Pancreas (tissue), 10 donors: ENCODE measurements at regions of chr9 and their contacts with region 1.

Region 1: DNA sequence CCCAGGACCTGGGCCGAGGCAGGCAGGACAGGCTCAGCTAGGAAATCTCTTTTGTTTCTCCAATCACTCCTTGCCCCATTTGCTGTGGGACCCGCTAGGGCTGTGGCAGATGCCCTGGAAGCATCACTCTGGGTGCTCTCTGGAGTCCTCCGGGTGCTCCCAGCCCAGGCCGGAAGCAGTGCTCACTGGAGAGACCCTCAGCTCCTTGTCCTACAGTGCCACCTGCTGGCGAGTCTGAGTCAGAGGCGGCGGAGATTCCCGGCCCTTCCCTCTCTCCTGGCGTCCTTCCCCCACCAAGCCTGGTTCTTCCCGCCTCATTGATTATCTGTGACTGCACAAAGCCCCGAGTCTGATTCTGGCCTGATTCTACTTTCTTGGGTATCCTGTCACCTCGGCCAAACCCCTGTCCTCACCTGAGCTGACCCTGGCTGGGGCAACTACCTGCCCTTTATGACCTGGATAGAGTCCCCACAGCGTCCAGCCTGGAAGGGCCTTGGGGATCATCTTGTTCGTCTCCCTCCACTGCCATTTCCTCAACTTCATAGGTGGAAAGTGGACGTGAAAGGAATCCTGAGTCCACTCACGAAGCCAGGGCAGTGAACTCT is 7.3 kb upstream of the BARHL1 start:
- DNase-seq: peak; percentile 37 to 86 (median 71)
- ATAC-seq: peak; percentile 70 to 98 (median 95)
- H3K4me3 ChIP-seq: no peak overlapping the region
- H3K27ac ChIP-seq: no peak overlapping the region
- H3K4me1 ChIP-seq: no peaks in the 10 kb centered on the region
- H3K27me3 ChIP-seq: peaks cover 0 to 14% (median 2%) of the 10 kb centered on the region in 4 donors
- CTCF ChIP-seq: peak; percentile 19 to 67 (median 52)

Region 2: DNA sequence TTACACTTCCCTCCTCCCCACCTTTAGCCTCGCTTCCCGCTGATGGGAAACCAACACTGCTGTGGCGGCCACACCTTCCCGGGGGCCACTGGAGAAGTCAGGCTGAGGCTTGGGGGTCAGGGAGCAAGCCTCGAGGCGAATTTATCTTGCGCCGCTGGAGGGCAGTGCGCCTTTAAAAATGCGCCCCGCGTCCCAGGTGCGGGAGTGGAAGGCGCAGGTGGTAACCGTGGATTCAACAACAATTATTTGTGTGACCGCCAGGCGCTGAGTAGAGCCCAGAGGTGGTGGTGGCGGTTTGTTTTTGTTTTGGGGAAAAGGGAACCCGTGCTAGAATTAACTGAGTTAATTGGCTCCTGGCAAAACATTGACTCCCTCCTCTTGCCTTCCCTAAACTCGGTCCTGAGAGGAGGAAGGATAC is 164.0 kb before region 1 on chr9:
- intact Hi-C with region 1: loop called in 1 of 3 experiments (anchors 10 kb)
- DNase-seq: peak; percentile 33 to 79 (median 52)
- ATAC-seq: peak; percentile 53 to 76 (median 72)
- H3K4me3 ChIP-seq: peak overlapping the region in 2 of 4 donors; percentile 8 to 13
- H3K27ac ChIP-seq: no peak overlapping the region
- H3K4me1 ChIP-seq: peaks cover 0 to 6% (median 0%) of the 10 kb centered on the region in 3 donors
- H3K27me3 ChIP-seq: peaks cover 0 to 38% (median 0%) of the 10 kb centered on the region in 4 donors
- CTCF ChIP-seq: peak; percentile 14 to 52 (median 47)

Region 3: DNA sequence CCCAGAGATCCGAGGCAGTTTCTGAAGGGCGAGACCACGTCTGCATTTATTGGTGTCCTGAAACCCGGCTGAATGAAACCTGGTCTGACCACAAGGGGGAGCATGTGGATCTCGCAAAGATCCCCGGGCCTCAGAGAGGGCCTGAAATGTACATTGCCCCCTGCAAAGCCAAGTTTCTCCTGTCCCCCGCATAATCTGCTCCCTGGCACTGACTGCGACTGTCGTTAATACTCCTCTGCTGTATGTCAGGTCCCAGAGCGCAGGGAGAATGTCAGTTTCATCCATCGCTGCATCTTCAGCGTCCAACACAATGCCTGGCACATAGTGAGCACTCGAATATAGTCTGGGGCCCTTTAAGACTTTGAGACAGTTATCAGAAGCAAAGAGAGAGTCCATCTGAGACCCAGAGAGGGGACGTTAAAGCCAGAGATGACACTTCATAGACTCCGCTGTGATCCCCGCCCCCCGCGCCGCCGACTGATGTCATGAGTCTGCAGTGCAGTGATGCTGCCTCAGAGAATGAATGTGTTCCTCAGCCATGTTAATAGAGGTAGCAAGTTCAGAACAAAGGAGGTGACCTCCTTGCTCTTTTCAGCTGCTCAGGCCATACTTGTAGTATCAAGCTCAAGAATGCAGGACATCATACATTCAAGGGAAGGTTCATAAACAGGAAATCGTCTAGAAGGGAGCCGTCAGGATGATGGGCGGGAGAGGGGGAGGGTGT is 67.2 kb before region 1 on chr9:
- intact Hi-C with region 1: loop called in 2 of 3 experiments (anchors 5 kb)
- DNase-seq: peak in 5 of 6 donors; percentile 42 to 78 (median 62)
- ATAC-seq: peak; percentile 73 to 88 (median 86)
- H3K4me3 ChIP-seq: no peak overlapping the region
- H3K27ac ChIP-seq: no peak overlapping the region
- H3K4me1 ChIP-seq: no peaks in the 10 kb centered on the region
- H3K27me3 ChIP-seq: peaks cover 0 to 5% (median 0%) of the 10 kb centered on the region in 4 donors
- CTCF ChIP-seq: peak; percentile 54 to 73 (median 68)